A673 (cell line): ENCODE measurements at regions of chr12 and their contacts with region 1.

Region 1: DNA sequence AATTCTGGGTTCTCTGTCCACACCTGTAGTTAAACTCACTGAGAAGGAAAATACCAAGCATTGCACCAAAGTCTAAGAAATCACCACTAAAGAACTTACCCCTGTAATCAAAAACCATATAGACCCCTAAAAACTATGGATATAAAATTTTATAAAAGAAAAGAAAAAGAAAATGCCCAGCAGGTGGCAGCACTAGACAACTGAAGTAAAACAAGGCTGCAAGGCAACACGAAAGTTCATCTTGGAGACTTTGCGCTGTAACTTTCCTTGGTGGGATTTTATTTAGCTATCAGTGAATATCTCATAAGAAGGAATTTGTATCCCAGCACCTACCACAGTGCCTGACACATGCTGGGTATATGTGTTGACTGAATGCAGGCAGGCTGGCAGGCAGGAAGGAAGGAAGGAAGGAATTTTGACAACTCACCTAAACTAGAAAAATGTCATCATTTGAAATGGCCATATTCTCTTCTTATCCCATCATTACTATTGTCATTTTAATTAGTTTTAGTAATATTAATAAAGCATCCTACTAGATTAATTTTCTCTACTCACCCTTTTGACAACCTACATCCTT is 68.2 kb upstream of the ETV6 start:
- DNase-seq: peak; percentile 90
- H3K4me3 ChIP-seq: no peak overlapping the region
- H3K27ac ChIP-seq: no peak overlapping the region
- H3K4me1 ChIP-seq: peaks cover 28% of the 10 kb centered on the region
- H3K27me3 ChIP-seq: no peaks in the 10 kb centered on the region
- CTCF ChIP-seq: peak; percentile 62

Region 2: DNA sequence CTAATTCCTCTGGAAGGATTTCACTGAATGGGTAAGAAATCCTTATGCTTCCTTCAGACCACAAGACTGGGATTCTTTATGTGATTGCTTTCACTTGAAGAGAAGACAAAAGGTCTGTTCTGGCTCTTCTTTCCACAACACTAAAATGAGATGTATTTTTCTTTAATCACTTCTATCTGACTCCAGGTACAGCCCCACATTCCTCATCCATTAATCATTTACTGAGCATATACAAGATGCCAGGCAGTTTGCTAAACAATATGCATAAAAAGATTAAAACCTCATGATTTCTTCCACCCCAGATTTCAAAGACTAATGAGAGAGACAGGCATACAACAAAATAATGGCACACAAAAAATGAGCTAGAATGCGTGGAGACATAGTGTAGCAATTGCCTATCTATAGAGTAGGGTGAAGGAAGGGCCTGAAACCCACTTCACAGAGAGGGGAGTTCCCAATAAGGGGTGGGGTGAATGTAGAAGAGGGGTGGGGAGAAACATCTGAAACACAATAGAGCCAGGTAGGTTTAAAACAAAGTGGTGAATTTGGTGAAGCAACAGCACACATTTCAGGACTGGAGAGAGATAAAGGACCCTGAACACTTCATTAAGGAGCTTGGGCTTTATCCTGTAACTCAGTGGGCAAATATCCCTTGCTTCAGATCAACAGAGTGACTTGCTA is 120.8 kb before region 1 on chr12:
- CTCF ChIA-PET with region 1: no interaction called
- POLR2A ChIA-PET with region 1: no interaction called
- intact Hi-C with region 1: no loop called
- DNase-seq: no peak
- H3K4me3 ChIP-seq: no peak overlapping the region
- H3K27ac ChIP-seq: no peak overlapping the region
- H3K4me1 ChIP-seq: no peaks in the 10 kb centered on the region
- H3K27me3 ChIP-seq: no peaks in the 10 kb centered on the region
- CTCF ChIP-seq: no peak

Region 3: GRCh38 chr12:11649703-11650521 is 68.6 kb after region 1 on chr12:
- CTCF ChIA-PET with region 1: no interaction called
- POLR2A ChIA-PET with region 1: no interaction called
- intact Hi-C with region 1: loop called (anchors 5 kb)
- DNase-seq: peak; percentile 67
- H3K4me3 ChIP-seq: peak overlapping the region; percentile 80
- H3K27ac ChIP-seq: peak overlapping the region; percentile 98
- H3K4me1 ChIP-seq: peaks cover 22% of the 10 kb centered on the region
- H3K27me3 ChIP-seq: no peaks in the 10 kb centered on the region
- CTCF ChIP-seq: no peak

Region 4: DNA sequence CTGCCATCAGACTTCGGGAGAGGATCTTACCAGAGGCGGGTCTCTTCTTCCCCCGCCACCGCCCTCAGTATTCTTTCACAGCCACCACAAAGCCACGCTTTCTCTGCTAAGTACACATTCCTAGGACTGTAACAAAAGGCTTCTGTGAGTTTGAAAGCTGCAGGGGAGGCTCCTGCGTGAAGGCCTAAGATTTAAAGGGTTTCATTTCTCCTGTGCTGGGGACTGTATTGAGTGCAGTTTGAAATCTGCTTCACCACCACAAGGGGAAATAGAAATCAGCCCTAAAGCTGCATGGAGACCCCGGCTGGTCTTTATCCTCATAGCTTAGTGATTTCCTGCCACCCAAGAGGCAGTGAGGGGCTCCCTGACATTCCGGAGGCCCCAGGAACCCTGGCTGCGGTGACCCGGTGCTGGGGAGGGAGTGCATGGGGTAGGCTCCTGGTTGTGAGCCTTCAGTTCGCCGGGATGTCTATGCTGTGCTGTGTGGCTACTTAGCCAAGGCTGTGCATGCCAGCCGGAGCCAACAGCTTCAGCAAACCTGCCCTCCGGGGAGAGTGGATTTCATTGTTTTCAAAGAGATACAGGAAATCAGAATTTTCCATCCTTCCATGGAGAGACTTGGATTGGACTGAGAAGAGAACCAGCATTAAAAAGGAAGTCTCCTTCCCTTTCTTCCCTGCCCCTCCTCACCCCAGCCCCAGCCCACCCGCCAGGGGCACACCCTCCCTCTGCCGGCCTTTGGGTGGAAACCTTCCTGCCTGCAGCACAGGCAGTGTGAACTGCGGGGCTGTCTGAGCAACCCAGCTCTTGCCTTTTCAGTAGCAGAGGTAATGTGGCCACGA is 231.5 kb after region 1 on chr12:
- CTCF ChIA-PET with region 1: no interaction called
- POLR2A ChIA-PET with region 1: no interaction called
- intact Hi-C with region 1: loop called (anchors 10 kb)
- DNase-seq: peak; percentile 69
- H3K4me3 ChIP-seq: peak overlapping the region; percentile 35
- H3K27ac ChIP-seq: peak overlapping the region; percentile 81
- H3K4me1 ChIP-seq: peaks cover 31% of the 10 kb centered on the region
- H3K27me3 ChIP-seq: no peaks in the 10 kb centered on the region
- CTCF ChIP-seq: peak; percentile 36; the same call in 1 of the 2 replicates

Region 5: GRCh38 chr12:12017798-12018197 is 436.5 kb after region 1 on chr12:
- CTCF ChIA-PET with region 1: interaction called, 7 read pairs
- POLR2A ChIA-PET with region 1: no interaction called
- intact Hi-C with region 1: loop called (anchors 5 kb)
- DNase-seq: peak; percentile 60
- H3K4me3 ChIP-seq: no peak overlapping the region
- H3K27ac ChIP-seq: no peak overlapping the region
- H3K4me1 ChIP-seq: peaks cover 27% of the 10 kb centered on the region
- H3K27me3 ChIP-seq: no peaks in the 10 kb centered on the region
- CTCF ChIP-seq: peak; percentile 75